ENCODE measurements at regions of chr3 and their contacts with region 1.

Region 1: DNA sequence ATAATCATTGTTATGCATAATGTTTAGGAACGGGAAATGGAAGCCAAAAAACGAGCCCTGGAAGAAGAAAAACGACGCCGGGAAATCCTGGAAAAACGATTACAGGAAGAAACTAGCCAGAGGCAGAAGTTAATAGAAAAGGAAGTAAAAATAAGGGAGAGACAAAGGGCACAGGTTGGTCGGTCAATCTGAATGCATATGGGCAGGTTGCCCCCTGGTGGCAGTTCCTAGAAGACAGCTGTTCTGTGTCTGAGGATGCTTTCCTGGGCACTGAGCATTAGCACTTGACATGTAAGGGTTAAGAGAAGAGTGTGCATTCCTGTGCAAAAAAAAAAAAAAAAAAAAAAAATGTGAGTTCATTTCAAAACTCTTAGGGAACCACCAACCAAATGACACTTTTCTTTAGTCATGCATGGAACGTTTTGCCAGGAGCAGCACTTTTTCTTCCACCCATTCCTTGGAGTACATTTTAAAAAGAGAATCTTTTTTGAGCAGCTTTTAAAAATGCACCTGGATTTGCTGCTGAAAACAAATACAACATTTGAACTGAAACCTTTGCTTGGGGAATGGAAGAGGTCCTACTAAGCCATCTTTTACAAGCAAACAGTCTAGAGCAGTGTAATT is 11.1 kb upstream of the ABHD10 start:
- DNase-seq: peak; percentile 77 to 84 (median 79)
- ATAC-seq: peak; percentile 95 to 98 (median 97)
- H3K4me3 ChIP-seq: no peak overlapping the region
- H3K27ac ChIP-seq: peak overlapping the region; percentile 26 to 44 (median 34)
- H3K4me1 ChIP-seq: peaks cover 0 to 14% (median 2%) of the 10 kb centered on the region in 4 donors
- H3K27me3 ChIP-seq: no peaks in the 10 kb centered on the region
- CTCF ChIP-seq: peak; percentile 83 to 88 (median 84)
- POLR2A ChIP-seq: no peak

Region 2: DNA sequence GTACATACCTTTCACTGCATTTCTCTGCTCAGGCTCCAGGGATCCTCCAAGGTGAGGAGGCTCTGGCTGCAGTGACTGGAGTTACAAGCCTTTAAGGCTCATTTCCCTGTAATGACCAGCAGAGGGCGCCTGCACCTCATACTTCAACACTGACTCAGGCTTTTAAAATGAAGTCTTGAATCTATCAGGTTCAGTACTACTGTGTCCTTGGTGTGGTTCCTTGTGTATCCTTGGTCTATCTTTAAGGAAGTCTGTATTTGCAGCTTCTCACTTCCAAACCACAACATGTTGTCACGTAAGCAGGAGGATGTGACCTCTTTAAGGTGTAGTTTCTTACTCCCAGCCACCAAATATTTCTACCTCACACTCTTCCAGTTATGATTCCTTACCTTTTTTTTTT is 250.2 kb before region 1 on chr3:
- intact Hi-C with region 1: loop called in 1 of 2 experiments (anchors 5 kb)
- DNase-seq: peak; percentile 51 to 70 (median 66)
- ATAC-seq: peak; percentile 90 to 92 (median 91)
- H3K4me3 ChIP-seq: no peak overlapping the region
- H3K27ac ChIP-seq: no peak overlapping the region
- H3K4me1 ChIP-seq: peaks cover 0 to 11% (median 0%) of the 10 kb centered on the region in 4 donors
- H3K27me3 ChIP-seq: no peaks in the 10 kb centered on the region
- CTCF ChIP-seq: peak; percentile 92 to 98 (median 94)
- POLR2A ChIP-seq: no peak

Measured in right lobe of liver (tissue), 6 donors.